CD8-positive, alpha-beta T cell (primary cell): ENCODE measurements at regions of chr1 and their contacts with region 1.

Region 1: GRCh38 chr1:112633628-112634027 is 14.0 kb downstream of the CAPZA1 start:
- DNase-seq: no peak
- ATAC-seq: no peak
- H3K4me3 ChIP-seq: no peak overlapping the region
- H3K4me3 Mint-ChIP-seq: no peak overlapping the region
- H3K27ac ChIP-seq: peak overlapping the region in 1 of 2 experiments; percentile 22
- H3K27ac Mint-ChIP-seq: peak overlapping the region; percentile 81
- H3K4me1 ChIP-seq: peaks cover 45% of the 10 kb centered on the region
- H3K4me1 Mint-ChIP-seq: peaks cover 75% of the 10 kb centered on the region
- H3K27me3 ChIP-seq: no peaks in the 10 kb centered on the region
- H3K27me3 Mint-ChIP-seq: no peaks in the 10 kb centered on the region
- CTCF ChIP-seq: no peak

Region 2: GRCh38 chr1:112558634-112559033 is 75.0 kb before region 1 on chr1:
- CTCF ChIA-PET with region 1: no interaction called
- POLR2A ChIA-PET with region 1: no interaction called
- intact Hi-C with region 1: loop called in 1 of 2 experiments (anchors 1 kb)
- DNase-seq: no peak
- ATAC-seq: no peak
- H3K4me3 ChIP-seq: no peak overlapping the region
- H3K4me3 Mint-ChIP-seq: no peak overlapping the region
- H3K27ac ChIP-seq: no peak overlapping the region
- H3K27ac Mint-ChIP-seq: no peak overlapping the region
- H3K4me1 ChIP-seq: no peaks in the 10 kb centered on the region
- H3K4me1 Mint-ChIP-seq: no peaks in the 10 kb centered on the region
- H3K27me3 ChIP-seq: no peaks in the 10 kb centered on the region
- H3K27me3 Mint-ChIP-seq: no peaks in the 10 kb centered on the region
- CTCF ChIP-seq: no peak

Region 3: DNA sequence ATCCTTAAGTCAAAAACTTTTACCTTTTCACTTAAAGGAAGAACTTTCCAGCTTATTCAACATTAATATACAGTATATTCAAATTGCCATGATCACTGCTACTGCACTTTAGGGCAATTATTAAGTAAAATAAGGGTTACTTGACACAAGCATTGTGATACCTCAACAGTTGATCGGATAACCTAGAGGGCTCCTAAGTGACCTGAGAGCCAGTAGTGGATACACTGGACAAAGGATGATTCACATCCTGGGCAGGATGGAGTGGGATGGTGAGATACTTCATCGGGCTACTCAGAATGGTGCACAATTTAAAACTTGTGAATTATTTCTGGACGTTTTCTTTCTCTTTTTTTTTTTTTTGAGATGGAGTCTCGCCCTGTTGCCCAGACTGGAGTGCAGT is 136.0 kb after region 1 on chr1:
- CTCF ChIA-PET with region 1: no interaction called
- POLR2A ChIA-PET with region 1: no interaction called
- intact Hi-C with region 1: no loop called
- DNase-seq: no peak
- ATAC-seq: no peak
- H3K4me3 ChIP-seq: no peak overlapping the region
- H3K4me3 Mint-ChIP-seq: no peak overlapping the region
- H3K27ac ChIP-seq: no peak overlapping the region
- H3K27ac Mint-ChIP-seq: no peak overlapping the region
- H3K4me1 ChIP-seq: no peaks in the 10 kb centered on the region
- H3K4me1 Mint-ChIP-seq: peaks cover 2% of the 10 kb centered on the region
- H3K27me3 ChIP-seq: no peaks in the 10 kb centered on the region
- H3K27me3 Mint-ChIP-seq: peaks cover 8% of the 10 kb centered on the region
- CTCF ChIP-seq: no peak

Region 4: DNA sequence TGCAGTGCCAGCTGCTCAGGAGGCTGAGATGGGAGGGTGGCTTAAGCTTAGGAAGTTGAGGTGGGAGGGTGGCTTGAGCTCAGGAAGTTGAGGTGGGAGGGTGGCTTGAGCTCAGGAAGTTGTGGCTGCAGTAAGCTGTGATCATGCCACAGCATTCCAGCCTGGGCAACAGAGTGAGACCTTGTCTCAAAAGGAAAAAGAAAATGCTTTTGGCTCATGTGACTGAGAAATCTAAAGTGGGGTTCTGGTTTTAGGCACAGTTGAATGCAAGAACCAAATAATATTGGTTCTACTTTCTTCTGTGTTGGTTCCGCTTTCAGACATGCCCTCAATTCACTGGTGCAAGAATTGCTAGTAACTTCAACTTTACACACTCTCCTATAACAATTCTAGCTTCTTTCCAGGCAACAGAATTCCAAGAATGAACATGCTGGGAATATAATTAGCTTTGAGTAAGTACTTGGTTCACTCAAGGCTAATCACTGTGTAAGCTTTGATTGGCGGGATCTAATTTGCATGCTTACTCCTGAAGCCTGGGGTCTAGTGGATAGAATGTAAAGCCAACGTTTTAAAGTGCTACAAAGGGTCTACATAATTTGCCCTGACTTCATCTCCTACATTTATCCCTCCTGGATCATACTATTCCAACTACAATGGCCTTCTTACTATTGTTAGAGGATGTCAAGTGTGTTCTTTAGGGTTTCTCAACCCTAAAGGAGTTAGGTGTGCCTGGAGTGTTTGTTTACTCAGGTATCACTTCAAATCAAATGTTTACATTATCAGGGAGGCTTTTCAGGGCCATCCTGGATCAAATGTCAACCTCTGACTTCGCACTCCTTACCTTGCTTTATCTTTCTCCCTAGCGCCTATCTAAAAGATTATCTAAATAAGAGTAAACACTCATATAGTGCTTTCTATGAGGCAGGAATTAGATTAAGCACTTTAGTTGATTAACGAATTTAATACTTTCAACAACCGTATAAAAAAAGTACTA is 207.3 kb after region 1 on chr1:
- CTCF ChIA-PET with region 1: no interaction called
- POLR2A ChIA-PET with region 1: no interaction called
- intact Hi-C with region 1: no loop called
- DNase-seq: peak in 2 of 9 experiments; percentile 6 to 9
- ATAC-seq: no peak
- H3K4me3 ChIP-seq: no peak overlapping the region
- H3K4me3 Mint-ChIP-seq: no peak overlapping the region
- H3K27ac ChIP-seq: no peak overlapping the region
- H3K27ac Mint-ChIP-seq: no peak overlapping the region
- H3K4me1 ChIP-seq: peaks cover 10% of the 10 kb centered on the region
- H3K4me1 Mint-ChIP-seq: peaks cover 13% of the 10 kb centered on the region
- H3K27me3 ChIP-seq: peaks cover 0 to 5% of the 10 kb centered on the region in 2 experiments
- H3K27me3 Mint-ChIP-seq: peaks cover 13% of the 10 kb centered on the region
- CTCF ChIP-seq: no peak